ENCODE measurements at regions of chr11 and their contacts with region 1.

Region 1: GRCh38 chr11:73971175-73971719 is 11.4 kb downstream of the UCP2 start:
- DNase-seq: no peak
- H3K4me3 Mint-ChIP-seq: no peak overlapping the region
- H3K27ac Mint-ChIP-seq: no peak overlapping the region
- H3K4me1 Mint-ChIP-seq: peaks cover 74% of the 10 kb centered on the region
- H3K27me3 Mint-ChIP-seq: no peaks in the 10 kb centered on the region

Region 2: DNA sequence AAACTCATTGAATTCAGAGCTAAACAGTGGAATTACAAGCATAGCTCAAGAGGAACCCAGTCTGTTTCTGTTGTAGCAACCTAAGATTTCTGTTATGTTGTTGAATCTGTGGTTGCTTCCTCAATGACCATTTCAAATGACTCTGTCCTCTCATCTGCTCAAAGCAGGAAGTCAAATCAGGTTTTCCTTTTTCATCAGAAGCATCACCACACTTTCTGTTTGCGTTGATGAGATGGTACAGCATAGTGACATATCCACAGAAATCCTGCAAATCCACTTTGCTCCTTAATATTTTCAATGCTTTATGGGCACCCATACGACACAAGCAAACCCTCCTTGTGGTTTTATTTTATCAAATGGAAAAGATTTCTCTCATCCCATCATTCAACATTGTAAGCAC is 24.0 kb after region 1 on chr11:
- CTCF ChIA-PET with region 1: no interaction called
- POLR2A ChIA-PET with region 1: interaction called, 20 read pairs
- DNase-seq: no peak
- H3K4me3 Mint-ChIP-seq: peak overlapping the region; percentile 44
- H3K27ac Mint-ChIP-seq: peak overlapping the region; percentile 87
- H3K4me1 Mint-ChIP-seq: peaks cover 70% of the 10 kb centered on the region
- H3K27me3 Mint-ChIP-seq: no peaks in the 10 kb centered on the region

Region 3: DNA sequence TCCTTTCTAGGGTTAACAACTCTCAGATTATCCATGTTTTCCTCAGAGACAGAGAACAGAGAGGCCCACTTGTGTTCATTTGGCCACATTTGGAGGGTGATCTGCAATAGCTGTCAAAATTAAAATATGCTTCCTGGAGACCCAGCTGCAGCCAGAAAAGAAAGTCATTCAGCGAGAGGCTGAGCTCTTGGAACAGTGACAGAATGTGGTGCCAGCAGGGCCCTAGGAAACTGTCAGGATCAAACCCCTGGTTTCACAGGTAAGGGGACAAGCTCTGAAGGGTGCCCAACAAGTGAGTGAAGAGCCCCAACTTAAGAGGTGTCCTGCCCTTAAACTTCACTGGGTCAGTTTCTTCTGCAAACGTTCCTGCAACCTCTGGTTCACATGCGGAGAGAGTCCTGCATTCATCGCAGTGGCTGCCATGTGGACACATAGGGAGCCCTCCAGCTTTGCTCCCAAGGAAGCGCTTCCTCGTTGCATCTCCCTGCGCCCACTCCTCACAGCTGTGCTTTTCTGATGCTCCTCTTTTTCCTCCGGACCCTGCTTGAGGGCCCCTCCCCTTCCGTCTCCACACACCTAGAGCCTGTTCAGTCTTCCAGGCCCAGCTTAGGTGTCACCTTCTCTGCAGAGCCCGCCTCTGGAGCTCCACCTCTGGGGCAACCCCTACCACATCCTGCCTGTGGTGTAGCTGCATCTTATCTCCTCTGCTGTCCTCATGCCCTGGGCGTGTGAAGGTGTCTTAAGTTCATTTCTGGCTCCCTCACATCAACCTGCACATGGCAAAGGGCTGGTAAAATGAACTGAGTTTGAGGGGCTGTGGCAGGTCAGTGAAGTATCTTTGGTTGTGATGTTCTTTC is 33.7 kb after region 1 on chr11:
- CTCF ChIA-PET with region 1: interaction called, 12 read pairs
- POLR2A ChIA-PET with region 1: interaction called, 84 read pairs
- DNase-seq: peak; percentile 92
- H3K4me3 Mint-ChIP-seq: peak overlapping the region; percentile 50
- H3K27ac Mint-ChIP-seq: peak overlapping the region; percentile 77
- H3K4me1 Mint-ChIP-seq: peaks cover 71% of the 10 kb centered on the region
- H3K27me3 Mint-ChIP-seq: no peaks in the 10 kb centered on the region

Region 4: GRCh38 chr11:74011360-74012073 is 40.3 kb after region 1 on chr11:
- CTCF ChIA-PET with region 1: no interaction called
- POLR2A ChIA-PET with region 1: interaction called, 84 read pairs
- DNase-seq: peak; percentile 56
- H3K4me3 Mint-ChIP-seq: no peak overlapping the region
- H3K27ac Mint-ChIP-seq: peak overlapping the region; percentile 86
- H3K4me1 Mint-ChIP-seq: peaks cover 84% of the 10 kb centered on the region
- H3K27me3 Mint-ChIP-seq: no peaks in the 10 kb centered on the region

Region 5: DNA sequence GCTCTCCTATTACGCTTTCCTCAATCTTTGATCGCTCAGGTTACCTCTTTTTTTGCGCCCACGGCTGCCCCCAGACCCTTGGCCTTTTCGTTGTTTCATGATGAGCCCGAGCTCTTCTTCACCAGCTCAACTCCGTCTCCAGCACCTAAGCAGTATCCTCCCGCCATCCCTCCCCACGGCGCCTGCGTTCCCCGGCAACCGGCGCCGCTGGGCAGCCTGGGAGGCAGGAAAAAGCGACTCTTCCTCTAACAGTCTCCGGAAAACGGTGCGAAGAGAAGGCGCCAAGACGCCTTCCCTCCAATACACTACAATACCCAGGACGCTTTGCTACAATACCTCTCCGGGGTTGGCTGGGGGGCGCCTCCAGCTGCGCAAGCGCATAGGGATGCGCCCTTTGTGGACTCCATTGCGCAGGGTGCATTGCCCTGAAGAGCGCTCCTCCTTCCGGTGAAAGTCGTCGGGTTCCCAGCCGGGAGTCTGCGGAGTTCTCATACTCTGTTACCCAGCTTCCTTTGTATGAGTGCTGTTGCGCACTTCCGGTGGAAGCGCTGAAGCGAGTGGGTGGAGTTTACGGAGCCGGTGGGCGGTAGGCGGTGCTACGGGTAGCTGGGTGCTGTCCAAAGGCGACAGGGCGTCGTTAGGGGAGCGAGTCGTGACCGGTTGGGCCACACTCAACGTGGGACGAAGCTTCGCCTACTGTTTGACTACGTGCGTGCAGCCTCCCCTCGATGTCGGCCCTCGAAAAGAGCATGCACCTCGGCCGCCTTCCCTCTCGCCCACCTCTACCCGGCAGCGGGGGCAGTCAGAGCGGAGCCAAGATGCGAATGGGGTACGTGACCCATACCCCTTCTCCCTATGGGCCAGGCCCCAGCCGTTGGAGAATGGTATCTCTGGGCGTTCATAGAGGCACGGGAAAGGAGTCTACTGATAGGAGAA is 199.7 kb after region 1 on chr11 and contains the starts of genes C2CD3 and PPME1:
- CTCF ChIA-PET with region 1: no interaction called
- POLR2A ChIA-PET with region 1: interaction called, 11 read pairs
- DNase-seq: peak; percentile 99
- H3K4me3 Mint-ChIP-seq: no peak within 1 kb of the TSS
- H3K27ac Mint-ChIP-seq: no peak within 1 kb of the TSS
- H3K4me1 Mint-ChIP-seq: peaks cover 24% of the 10 kb centered on the region
- H3K27me3 Mint-ChIP-seq: no peaks in the 10 kb centered on the region
- total RNA-seq, gene C2CD3: 30.8 to 32.2 TPM
- total RNA-seq, gene PPME1: 27.3 to 28.0 TPM

Measured in activated CD4-positive, alpha-beta memory T cell treated with anti-CD3 and anti-CD28 coated beads, Interleukin-2, amount 10 ng/mL, durations not matched to agents 7 days and 5 days (primary cell).